HEK293 (cell line): ENCODE measurements at regions of chr11 and their contacts with region 1.

Region 1: GRCh38 chr11:1652771-1653540 is 23.4 kb downstream of the KRTAP5-5 start:
- H3K4me3 ChIP-seq: no peak overlapping the region
- H3K27ac ChIP-seq: no peak overlapping the region
- H3K4me1 ChIP-seq: no peaks in the 10 kb centered on the region
- CTCF ChIP-seq: peak; percentile 81

Region 2: DNA sequence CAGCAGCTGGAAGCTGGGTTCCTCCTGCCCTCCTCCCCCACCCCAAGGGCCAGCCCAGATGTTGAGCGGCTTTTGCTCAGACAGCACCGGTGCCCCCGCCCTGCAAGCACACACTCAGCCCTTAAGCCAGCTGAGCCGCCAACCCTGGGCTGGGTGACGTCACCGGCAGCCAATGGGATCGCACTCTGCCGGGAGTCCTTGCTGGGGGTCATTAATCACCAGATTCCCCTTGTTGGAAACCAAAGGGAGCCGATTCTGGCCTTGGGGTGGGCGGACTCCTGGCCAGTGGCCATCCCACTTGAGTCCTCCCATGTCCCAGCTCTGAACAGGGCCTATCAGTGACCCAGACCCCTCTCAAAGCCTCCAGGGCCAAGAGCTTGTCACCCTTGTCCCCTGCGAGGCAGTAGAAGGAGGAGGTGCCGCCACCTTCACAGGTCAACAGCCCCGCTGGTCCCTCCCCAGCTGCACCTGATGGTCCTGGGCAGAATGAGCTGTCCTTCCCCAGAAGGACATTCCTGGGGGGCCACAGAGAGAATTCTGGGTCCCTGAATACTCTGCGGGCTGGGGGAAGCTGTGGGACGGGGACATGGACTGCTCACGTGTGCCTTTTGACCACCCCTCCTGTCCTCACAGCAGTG is 88.3 kb before region 1 on chr11:
- CTCF ChIA-PET with region 1: no interaction called
- POLR2A ChIA-PET with region 1: no interaction called
- H3K4me3 ChIP-seq: no peak overlapping the region
- H3K27ac ChIP-seq: no peak overlapping the region
- H3K4me1 ChIP-seq: no peaks in the 10 kb centered on the region
- CTCF ChIP-seq: no peak

Region 3: DNA sequence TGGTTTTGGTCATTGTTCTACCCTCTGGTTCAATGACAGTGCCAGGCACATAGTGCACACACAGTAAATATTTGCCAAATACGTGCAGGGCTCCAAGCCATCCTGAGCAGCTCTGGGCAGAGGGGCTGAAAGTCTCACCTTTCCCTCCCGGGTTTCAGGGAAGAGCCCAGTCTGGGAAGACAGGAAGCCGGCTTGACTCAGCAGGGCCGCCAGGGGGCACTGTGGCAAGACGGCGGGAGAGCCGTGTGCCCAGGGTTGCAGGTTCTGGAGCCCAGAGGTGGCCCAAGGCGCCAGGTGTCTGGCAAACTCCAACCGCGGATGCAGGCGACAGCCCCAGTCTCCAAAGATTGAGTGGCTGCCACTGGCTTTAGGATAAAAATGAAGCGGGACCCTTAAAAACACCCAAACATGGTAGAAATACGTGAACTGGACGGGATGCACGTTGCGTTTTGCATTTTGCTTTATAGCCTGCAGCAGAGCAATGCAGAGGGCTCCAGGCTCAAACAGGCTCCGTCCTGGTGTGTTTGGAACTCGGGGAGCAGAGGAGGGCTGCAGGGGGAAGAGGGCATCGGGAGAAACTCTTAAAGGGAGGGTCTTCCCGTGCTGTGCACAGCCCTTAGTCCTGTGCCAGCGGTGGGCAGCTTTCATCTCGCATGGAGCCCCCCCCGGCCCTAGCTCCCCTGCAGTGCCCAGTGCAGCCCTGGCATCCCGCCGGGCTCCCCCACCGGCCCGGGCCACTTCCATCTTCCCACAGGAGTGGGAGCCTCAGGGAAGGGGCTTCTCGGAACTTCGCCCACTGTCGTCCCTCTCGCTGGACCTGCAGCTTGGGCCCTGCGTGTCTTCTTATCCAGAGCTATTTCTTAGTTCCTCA is 12.6 kb before region 1 on chr11:
- CTCF ChIA-PET with region 1: interaction called, 52 read pairs
- POLR2A ChIA-PET with region 1: no interaction called
- H3K4me3 ChIP-seq: no peak overlapping the region
- H3K27ac ChIP-seq: no peak overlapping the region
- H3K4me1 ChIP-seq: no peaks in the 10 kb centered on the region
- CTCF ChIP-seq: peak; percentile 44

Region 4: DNA sequence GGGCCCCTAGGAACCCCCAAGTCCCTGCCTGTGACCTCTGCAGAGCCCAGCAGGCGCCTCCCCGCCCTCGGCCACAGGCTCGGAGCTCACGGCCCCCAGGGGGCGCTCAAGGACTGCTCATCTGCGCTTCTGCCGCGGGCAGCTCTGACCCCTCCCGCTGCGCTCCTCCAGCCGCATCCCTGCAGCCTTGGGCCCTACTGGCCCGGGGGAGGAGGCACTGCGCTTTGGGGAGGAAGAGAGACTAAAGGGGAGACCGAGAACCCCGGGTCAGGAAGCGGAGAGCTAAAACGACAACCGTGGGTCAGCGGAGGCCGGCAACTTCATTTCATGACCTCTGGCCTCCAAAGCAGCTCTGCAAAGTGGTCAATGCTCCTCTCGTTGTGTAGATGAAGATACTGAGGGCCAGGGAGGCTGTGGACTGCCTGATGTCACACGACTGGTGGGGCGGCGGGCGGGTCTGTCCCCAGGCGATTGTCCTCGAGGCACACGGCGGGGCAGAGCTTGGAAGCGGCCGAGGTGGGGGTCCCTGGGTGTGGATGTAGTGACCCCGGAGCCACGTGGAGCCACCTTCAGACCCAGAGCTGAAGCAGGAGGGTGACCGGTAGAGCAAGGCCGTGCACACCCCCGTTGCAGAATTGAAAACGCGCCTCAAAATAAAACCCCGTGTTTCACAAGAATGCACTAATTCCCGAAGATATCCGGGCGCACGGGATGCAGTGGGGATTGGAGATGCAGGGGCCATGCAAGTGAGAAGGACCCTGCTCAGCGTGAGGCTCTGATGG is 41.3 kb after region 1 on chr11:
- CTCF ChIA-PET with region 1: interaction called, 95 read pairs
- POLR2A ChIA-PET with region 1: interaction called, 9 read pairs
- H3K4me3 ChIP-seq: no peak overlapping the region
- H3K27ac ChIP-seq: no peak overlapping the region
- H3K4me1 ChIP-seq: no peaks in the 10 kb centered on the region
- CTCF ChIP-seq: peak; percentile 91

Region 5: DNA sequence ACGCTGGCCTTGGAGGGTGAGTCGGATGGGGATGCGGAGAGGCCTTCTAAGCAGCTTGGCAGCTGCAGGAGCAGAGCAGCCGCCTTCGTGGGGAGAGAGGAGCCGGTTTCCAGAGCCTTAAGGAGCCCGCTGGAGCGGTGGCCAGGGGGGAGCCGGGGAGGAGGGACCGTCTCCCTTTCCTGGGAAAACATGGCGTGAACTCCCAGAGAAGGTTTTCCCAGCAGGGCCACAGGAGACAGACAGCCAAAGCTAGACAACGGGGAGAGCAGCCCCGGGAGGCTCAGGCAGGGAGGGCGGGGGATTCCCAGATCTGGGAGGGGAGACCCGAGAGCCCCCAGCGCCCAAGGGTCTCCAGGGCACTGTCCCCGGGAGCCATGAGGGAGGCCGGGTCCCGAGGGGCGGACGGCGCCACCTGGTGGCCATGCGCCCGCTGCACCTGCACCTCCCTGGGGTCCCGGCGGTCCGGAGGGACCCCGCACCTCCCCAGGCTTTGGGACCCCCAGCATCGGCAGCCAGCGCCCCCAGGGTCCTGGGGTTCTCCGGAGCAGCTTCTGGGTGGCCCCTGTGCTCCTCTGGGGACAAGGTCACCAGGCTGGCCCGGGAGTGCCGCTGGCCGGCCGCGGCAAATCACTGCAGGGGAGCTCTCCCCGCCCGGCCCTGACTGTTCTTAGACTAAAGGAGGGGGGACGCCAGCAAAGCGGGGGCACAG is 179.4 kb after region 1 on chr11:
- CTCF ChIA-PET with region 1: interaction called, 116 read pairs
- POLR2A ChIA-PET with region 1: no interaction called
- H3K4me3 ChIP-seq: no peak overlapping the region
- H3K27ac ChIP-seq: no peak overlapping the region
- H3K4me1 ChIP-seq: no peaks in the 10 kb centered on the region
- CTCF ChIP-seq: peak; percentile 85

Region 6: GRCh38 chr11:1882519-1883238 is 229.7 kb after region 1 on chr11:
- CTCF ChIA-PET with region 1: interaction called, 13 read pairs
- POLR2A ChIA-PET with region 1: no interaction called
- H3K4me3 ChIP-seq: no peak overlapping the region
- H3K27ac ChIP-seq: no peak overlapping the region
- H3K4me1 ChIP-seq: no peaks in the 10 kb centered on the region
- CTCF ChIP-seq: peak; percentile 82

Region 7: GRCh38 chr11:2015025-2015424 is 362.1 kb after region 1 on chr11:
- CTCF ChIA-PET with region 1: no interaction called
- POLR2A ChIA-PET with region 1: no interaction called
- H3K4me3 ChIP-seq: no peak overlapping the region
- H3K27ac ChIP-seq: no peak overlapping the region
- H3K4me1 ChIP-seq: no peaks in the 10 kb centered on the region
- CTCF ChIP-seq: no peak

Region 8: GRCh38 chr11:2142762-2143202 is 489.8 kb after region 1 on chr11:
- CTCF ChIA-PET with region 1: interaction called, 138 read pairs
- POLR2A ChIA-PET with region 1: no interaction called
- H3K4me3 ChIP-seq: no peak overlapping the region
- H3K27ac ChIP-seq: no peak overlapping the region
- H3K4me1 ChIP-seq: no peaks in the 10 kb centered on the region
- CTCF ChIP-seq: no peak